Posterior vena cava (tissue), 2 donors: ENCODE measurements at regions of chr18 and their contacts with region 1.

Region 1: DNA sequence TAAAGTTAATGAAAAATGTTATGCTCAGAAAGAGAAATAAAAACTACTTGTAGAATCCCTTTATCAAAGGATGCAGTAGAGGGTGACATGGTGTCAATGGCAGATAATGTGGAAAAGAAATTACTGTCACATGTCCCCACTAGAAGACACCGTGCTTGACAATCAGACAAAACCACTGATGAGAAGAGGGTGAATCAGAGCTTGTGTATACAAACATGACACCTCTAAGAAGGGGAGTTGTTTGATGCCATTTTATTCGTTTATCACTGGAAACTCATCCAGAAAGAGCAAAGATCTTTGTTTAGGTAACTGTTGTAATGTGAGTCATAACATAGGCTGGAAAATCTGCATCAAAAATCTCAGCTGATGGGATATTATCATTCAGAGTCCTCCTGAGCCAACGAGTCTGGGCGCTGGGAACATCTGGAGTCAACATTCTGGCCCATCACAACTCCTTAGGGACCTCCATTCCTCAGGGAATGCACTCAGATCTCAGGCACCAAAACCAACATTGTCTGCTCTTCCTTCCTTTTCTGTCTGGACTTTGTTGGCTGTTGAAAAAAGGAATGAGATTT is 49.5 kb upstream of the RAB12 start:
- DNase-seq: no peak

Region 2: GRCh38 chr18:7879717-7880116 is 680.0 kb before region 1 on chr18:
- intact Hi-C with region 1: loop called in 1 of 2 experiments (anchors 5 kb)
- DNase-seq: no peak

Region 3: DNA sequence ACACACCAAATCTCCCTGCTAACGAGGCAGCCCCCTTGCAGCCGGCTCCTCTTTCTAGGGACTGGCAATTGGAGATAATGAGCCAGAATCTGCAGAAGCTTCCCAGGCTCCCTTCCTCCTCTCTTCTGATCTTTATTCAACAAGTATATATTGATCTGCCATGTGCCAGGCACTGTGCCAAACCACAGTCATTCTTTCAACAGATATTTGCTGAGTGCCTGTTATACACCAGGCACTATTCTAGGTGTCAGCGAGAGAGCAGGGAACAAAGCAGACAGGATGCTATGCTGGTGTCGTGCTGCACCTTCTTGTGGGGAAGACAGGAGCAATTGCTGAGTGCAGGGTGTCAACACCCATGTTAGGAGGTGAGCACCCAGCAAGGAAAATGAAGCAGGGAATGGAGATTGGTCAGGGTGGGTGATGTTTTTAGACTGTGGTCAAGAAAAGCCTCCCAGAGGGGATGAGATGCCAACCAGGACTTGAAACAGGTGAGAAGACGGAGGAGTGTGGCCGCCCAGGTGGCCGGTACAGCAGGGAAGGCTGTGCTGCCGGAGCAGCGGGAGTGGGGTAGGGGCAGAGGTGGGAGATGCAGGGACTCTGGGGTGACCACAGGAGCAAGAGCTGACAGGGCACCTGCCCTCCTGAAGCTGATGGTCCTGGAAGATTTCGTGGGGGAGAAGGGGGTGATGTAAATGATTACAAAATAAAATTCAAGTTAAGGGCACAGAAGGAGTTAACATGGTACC is 258.1 kb before region 1 on chr18:
- intact Hi-C with region 1: no loop called
- DNase-seq: no peak

Region 4: GRCh38 chr18:8478166-8478967 is 81.3 kb before region 1 on chr18:
- intact Hi-C with region 1: no loop called
- DNase-seq: peak; percentile 85

Region 5: GRCh38 chr18:8584798-8585197 is 25.1 kb after region 1 on chr18:
- intact Hi-C with region 1: no loop called
- DNase-seq: no peak

Region 6: DNA sequence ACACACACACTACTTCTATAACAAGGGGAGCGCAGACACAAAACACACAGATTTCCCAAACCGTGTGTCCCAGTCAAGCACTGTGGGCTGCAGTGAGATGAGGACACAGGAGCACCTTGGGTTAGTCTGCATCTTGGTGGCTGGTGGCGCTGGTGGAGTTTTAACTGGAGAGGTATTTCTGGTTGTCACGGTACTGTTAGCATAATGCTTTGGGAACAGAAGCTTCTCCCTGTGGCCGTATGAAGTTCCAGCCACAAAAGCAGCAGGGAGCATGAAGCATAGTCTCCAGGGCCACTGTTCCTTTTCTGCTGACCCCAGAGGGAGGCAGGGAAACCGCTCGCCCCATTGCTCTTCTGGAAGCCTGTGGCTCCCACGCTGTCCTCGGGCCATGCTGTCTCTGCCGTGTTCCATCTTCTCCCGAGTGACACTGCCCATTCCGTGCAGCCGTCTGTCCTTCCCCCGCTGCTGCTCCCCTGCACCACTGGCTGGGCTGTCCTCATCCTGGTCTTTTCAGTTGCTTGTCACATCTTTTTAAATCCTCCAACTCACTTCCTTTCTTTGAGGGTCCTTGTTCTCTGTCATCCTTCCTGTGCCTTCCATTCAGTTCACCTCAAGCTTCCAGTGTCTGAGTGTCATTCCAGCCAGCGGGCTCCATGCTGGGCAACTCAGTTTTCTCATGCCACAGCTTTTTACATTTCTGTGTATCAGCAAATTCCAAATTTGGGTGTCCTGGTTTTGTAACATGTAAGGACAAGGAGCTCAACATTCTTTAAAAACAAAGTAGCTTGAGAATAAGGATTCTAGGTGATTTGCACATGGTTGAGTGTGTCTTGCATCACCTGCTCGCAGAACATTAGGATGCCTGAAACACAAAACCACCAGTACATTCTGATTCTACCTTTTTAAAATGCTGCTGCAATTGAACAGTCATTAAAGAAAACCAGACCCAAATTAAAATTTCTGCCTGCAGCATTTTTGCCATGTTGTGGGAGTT is 270.7 kb after region 1 on chr18:
- intact Hi-C with region 1: no loop called
- DNase-seq: no peak